ENCODE measurements at regions of chr18 and their contacts with region 1.

Region 1: GRCh38 chr18:32542221-32542798 is 71.6 kb upstream of the GAREM1 start:
- DNase-seq: no peak
- ATAC-seq: no peak
- H3K4me3 ChIP-seq: no peak overlapping the region
- H3K27ac ChIP-seq: no peak overlapping the region
- H3K4me1 ChIP-seq: no peaks in the 10 kb centered on the region
- H3K27me3 ChIP-seq: no peaks in the 10 kb centered on the region

Region 2: GRCh38 chr18:32480581-32480980 is 61.7 kb before region 1 on chr18:
- intact Hi-C with region 1: loop called in 1 of 2 experiments (anchors 5 kb)
- DNase-seq: no peak
- ATAC-seq: no peak
- H3K4me3 ChIP-seq: no peak overlapping the region
- H3K27ac ChIP-seq: no peak overlapping the region
- H3K4me1 ChIP-seq: no peaks in the 10 kb centered on the region
- H3K27me3 ChIP-seq: no peaks in the 10 kb centered on the region

Region 3: GRCh38 chr18:32612301-32613048 is 70.2 kb after region 1 on chr18:
- intact Hi-C with region 1: no loop called
- DNase-seq: no peak
- ATAC-seq: no peak
- H3K4me3 ChIP-seq: no peak overlapping the region
- H3K27ac ChIP-seq: no peak overlapping the region
- H3K4me1 ChIP-seq: no peaks in the 10 kb centered on the region
- H3K27me3 ChIP-seq: no peaks in the 10 kb centered on the region

Region 4: DNA sequence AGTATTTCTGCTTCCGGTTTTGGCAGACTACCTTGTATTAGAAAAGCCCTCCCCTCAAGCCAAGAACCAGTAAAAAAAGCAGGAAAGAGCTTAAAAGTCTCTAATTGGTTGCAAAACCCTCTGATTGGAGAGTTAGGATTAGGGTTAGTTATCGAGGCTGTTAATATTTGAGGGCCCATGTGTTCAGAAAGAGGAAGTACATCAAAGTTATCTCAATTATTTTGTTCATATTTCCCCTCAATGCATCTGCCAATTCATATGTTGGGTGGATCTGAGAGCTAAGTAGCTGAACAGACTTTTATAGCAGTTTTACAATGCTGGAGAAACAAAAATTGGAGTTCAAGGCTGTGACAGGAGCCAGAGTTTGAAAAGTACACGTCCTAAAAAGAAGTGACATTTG is 273.6 kb after region 1 on chr18:
- intact Hi-C with region 1: no loop called
- DNase-seq: no peak
- ATAC-seq: no peak
- H3K4me3 ChIP-seq: no peak overlapping the region
- H3K27ac ChIP-seq: no peak overlapping the region
- H3K4me1 ChIP-seq: no peaks in the 10 kb centered on the region
- H3K27me3 ChIP-seq: peaks cover 0 to 1% of the 10 kb centered on the region in 2 donors

Measured in aorta (tissue), 5 donors.